Transverse colon (tissue), 4 donors: ENCODE measurements at regions of chr17 and their contacts with region 1.

Region 1: DNA sequence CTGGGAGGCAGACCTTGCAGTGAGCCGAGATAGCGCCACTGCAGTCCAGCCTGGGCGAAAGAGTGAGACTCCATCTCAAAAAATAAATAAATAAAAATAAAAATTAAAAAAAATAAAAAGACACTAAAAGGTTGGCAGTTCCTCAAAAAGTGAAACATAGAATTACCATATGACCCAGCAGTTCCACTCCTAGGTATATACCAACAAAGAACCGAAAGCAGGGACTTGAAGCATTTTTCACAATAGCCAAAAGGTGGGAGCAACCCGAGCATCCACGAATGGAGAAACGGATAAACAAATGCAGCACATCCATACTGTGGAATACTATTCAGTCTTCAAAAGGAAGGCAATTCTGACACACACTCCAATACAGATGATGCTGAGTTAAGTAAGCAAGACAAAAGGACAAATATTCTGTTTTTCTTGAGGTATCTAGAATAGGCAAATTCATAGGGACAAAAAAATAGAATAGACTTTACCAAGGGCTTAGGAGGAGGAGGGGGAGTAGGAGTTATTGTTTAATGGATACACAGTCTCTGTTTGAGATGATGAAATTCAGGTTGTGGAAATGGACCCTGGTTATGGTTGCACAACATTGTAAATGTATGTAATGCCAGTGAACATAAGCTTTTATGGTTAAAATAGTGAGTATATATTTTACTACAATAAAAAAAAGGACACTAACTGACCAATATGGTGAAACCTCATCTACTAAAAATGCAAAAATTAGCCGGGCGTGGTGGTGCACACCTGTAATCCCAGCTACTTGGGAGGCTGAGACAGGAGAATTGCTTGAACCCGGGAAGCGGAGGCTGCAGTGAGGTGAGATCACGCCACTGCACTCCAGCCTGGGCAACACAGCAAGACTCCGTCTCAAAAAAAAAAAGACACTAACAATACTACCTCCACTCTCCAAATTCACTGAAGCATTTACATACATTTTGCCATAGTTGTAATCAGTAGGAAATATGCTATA is 27.0 kb upstream of the SLC35B1 start:
- DNase-seq: no peak
- H3K4me3 ChIP-seq: no peak overlapping the region
- H3K27ac ChIP-seq: no peak overlapping the region
- H3K4me1 ChIP-seq: peaks cover 11 to 47% (median 20%) of the 10 kb centered on the region in 4 donors
- H3K27me3 ChIP-seq: no peaks in the 10 kb centered on the region
- CTCF ChIP-seq: no peak
- EP300 ChIP-seq: no peak
- POLR2A ChIP-seq: no peak

Region 2: GRCh38 chr17:49616601-49617131 is 118.1 kb before region 1 on chr17:
- in situ Hi-C with region 1: no loop called
- intact Hi-C with region 1: no loop called
- DNase-seq: peak; percentile 38
- H3K4me3 ChIP-seq: no peak overlapping the region
- H3K27ac ChIP-seq: peak overlapping the region; percentile 57 to 80 (median 68)
- H3K4me1 ChIP-seq: peaks cover 13 to 36% (median 19%) of the 10 kb centered on the region in 4 donors
- H3K27me3 ChIP-seq: no peaks in the 10 kb centered on the region
- CTCF ChIP-seq: no peak
- EP300 ChIP-seq: no peak
- POLR2A ChIP-seq: no peak

Region 3: DNA sequence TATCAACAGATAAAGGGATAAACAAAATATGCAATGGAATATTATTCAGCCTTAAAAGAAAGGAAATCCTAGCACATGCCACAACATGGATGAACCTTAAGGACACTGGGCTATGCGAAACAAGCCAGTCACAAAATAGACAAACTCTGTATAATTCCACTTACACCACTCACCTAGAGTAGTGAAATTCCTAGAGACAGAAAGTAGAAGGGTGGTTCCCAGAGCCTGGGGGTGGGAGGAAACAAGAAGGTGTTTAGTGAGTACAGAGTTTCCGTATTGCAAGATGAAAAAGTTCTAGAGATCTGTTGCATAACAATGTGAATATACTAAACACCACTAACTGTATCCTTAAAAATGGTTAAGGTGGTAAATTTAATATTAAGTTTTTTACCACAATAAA is 66.9 kb before region 1 on chr17:
- in situ Hi-C with region 1: no loop called
- intact Hi-C with region 1: no loop called
- DNase-seq: no peak
- H3K4me3 ChIP-seq: no peak overlapping the region
- H3K27ac ChIP-seq: peak overlapping the region in 2 of 4 donors; percentile 19 to 35
- H3K4me1 ChIP-seq: peaks cover 4 to 55% (median 35%) of the 10 kb centered on the region in 4 donors
- H3K27me3 ChIP-seq: no peaks in the 10 kb centered on the region
- CTCF ChIP-seq: no peak
- EP300 ChIP-seq: no peak
- POLR2A ChIP-seq: no peak

Region 4: GRCh38 chr17:49707608-49708514 is 26.9 kb before region 1 on chr17 and contains the start of gene SLC35B1:
- in situ Hi-C with region 1: no loop called
- intact Hi-C with region 1: no loop called
- DNase-seq: peak; percentile 99
- H3K4me3 ChIP-seq: peak within 1 kb of the TSS; percentile 83 to 99 (median 96)
- H3K27ac ChIP-seq: peak within 1 kb of the TSS; percentile 85 to 98 (median 92)
- H3K4me1 ChIP-seq: peaks cover 11 to 31% (median 15%) of the 10 kb centered on the region in 4 donors
- H3K27me3 ChIP-seq: no peaks in the 10 kb centered on the region
- CTCF ChIP-seq: peak; percentile 56 to 80 (median 66)
- EP300 ChIP-seq: no peak
- POLR2A ChIP-seq: peak; percentile 70
- total RNA-seq, gene SLC35B1: 23.5 to 73.3 (median 56.2) TPM

Region 5: GRCh38 chr17:49753959-49754391 is 19.2 kb after region 1 on chr17:
- in situ Hi-C with region 1: no loop called
- intact Hi-C with region 1: loop called (anchors 1 kb)
- DNase-seq: no peak
- H3K4me3 ChIP-seq: no peak overlapping the region
- H3K27ac ChIP-seq: no peak overlapping the region
- H3K4me1 ChIP-seq: peaks cover 0 to 24% (median 0%) of the 10 kb centered on the region in 4 donors
- H3K27me3 ChIP-seq: no peaks in the 10 kb centered on the region
- CTCF ChIP-seq: no peak
- EP300 ChIP-seq: no peak
- POLR2A ChIP-seq: no peak

Region 6: GRCh38 chr17:50331085-50331791 is 596.4 kb after region 1 on chr17:
- in situ Hi-C with region 1: no loop called
- intact Hi-C with region 1: no loop called
- DNase-seq: no peak
- H3K4me3 ChIP-seq: no peak overlapping the region
- H3K27ac ChIP-seq: no peak overlapping the region
- H3K4me1 ChIP-seq: no peaks in the 10 kb centered on the region
- H3K27me3 ChIP-seq: peaks cover 6% of the 10 kb centered on the region
- CTCF ChIP-seq: no peak
- EP300 ChIP-seq: no peak
- POLR2A ChIP-seq: no peak